GM13976 (cell line): ENCODE measurements at regions of chr1 and their contacts with region 1.

Region 1: DNA sequence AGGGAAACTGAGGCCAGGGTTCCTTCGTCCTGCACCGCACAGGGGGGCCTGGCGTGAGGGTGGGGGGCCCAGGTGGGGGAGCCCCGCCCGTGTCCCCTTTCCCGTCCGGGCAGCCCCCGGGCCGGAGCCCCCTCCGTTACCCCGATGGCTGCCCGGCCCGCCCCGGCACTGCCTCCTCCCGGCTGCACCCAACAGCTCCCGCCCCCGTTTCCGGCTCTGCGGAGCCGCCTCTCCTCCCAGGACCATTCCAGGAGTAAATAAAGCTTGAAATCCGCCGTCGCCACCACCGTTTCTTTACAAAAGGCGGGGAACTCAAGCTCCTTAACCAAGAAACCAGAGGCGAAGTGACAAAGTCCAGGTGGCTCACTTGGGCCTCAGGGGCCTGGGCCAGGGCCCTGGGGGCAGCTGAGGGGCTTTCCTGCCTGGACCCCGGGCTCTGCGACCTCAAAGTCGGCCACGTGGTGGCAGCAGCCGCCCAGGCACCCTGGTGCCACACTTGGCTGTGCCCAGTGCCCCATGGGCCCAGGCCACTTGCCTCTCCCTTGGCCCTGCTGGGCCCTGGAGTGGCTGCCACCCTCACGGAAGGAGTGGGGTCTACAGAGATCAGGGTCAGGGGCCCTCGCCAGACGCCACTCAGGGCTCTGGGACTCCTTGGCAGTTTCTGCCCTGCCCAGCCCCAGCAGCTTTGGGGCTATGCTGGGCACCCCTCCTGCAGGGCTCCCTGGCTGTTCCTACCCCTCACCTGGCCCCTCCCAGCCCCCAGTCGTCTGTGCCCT is 514 bp upstream of the FAAP20 start:
- DNase-seq: peak; percentile 90
- CTCF ChIP-seq: peak; percentile 86

Region 2: DNA sequence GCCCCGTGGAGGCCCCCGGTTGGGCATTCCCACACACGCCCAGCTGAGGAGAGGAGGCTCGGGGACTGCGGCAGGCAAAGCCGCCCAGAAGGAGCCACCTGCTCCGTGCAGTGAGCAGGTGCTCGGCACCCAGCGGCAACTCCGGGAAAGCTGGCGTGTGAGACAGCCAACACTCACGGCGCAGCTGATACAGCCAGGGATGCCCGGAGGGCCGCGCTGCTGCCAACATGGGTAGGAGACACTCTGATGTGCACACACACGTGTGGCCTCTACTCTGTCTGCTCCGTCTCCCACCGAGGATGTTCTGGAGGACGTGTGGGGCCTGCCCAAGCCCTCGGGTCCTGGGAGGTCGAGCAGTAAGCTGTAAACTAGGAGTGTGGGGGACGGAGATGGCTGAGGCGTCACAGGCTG is 183.4 kb after region 1 on chr1:
- in situ Hi-C with region 1: loop called (anchors 5 kb)
- DNase-seq: no peak
- CTCF ChIP-seq: no peak

Region 3: GRCh38 chr1:2499986-2500596 is 305.0 kb after region 1 on chr1:
- in situ Hi-C with region 1: no loop called
- DNase-seq: no peak
- CTCF ChIP-seq: no peak

Region 4: GRCh38 chr1:3249631-3250501 is 1054.8 kb after region 1 on chr1:
- in situ Hi-C with region 1: no loop called
- DNase-seq: no peak
- CTCF ChIP-seq: no peak